ENCODE measurements at regions of chr10 and their contacts with region 1.

Region 1: GRCh38 chr10:116787893-116788665 is 45.7 kb upstream of the HSPA12A start:
- DNase-seq: peak; percentile 87

Region 2: DNA sequence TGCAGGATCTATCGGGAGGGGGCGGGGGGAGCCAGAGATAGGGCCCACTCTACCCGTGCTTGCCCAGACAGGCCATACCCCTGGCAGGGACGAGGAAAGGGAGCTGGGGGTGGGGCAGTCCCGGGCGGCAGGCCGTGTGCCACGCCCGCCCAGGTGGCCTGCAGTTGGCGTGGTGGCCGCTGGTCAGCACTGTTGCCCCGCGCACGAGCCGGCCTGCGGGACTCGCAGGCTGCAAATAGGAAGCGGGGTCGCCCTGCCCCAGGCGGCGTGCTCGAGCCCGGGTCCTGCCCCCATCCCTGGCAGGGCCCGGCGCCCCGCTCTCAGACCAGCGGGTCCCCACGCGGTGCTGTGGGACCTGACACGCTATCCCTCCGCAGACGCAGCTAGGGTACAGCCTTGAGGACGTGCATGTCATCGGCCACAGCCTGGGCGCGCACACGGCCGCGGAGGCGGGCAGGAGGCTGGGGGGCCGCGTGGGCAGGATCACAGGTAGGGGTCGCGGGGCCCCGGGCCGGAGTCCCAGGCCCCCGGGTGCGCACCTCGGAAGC is 160.6 kb before region 1 on chr10:
- CTCF ChIA-PET with region 1: interaction called, 11 read pairs
- POLR2A ChIA-PET with region 1: interaction called, 4 read pairs
- DNase-seq: no peak

Region 3: DNA sequence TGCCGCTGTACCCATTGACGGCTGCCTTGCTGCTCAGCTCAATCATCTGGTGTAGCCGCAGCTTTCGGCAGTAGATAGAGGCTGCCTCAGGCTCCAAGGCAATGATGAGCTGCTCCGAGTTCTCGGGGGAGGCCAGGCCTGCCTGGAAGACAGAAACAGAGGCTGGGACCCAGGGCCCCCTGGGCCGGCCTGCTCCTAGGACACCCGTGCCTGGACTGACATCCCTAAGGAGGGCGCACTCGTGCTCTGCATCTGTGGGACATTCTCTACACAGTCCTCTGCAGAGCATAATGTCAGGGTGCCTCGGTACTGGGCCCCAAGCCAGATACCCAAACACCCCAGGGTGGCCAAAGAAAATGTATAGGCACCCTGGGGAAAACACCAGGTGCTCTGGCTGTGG is 104.3 kb before region 1 on chr10:
- CTCF ChIA-PET with region 1: interaction called, 24 read pairs
- POLR2A ChIA-PET with region 1: no interaction called
- DNase-seq: no peak

Region 4: GRCh38 chr10:116760919-116761318 is 27.2 kb before region 1 on chr10:
- CTCF ChIA-PET with region 1: interaction called, 12 read pairs
- POLR2A ChIA-PET with region 1: no interaction called
- DNase-seq: no peak

Region 5: GRCh38 chr10:116809483-116810119 is 21.5 kb after region 1 on chr10:
- CTCF ChIA-PET with region 1: no interaction called
- POLR2A ChIA-PET with region 1: no interaction called
- DNase-seq: peak; percentile 79

Region 6: DNA sequence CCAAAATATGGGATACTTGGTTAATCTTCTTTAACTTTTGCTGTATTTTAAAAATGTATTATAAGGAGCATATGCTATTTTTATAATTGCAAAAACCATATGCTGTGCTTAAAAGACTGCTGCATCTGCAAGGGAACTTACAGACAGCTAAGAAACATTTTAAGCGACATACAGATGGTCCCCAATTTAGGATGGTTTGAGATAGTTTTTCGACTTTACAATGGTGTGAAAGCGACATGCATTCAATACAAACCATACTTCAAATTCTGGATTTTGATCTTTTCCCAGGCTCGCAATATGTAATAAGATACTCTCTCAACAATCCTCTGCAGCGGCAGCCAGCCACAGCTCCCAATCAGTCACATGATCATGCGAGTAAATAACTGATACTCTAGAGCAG is 143.7 kb after region 1 on chr10:
- CTCF ChIA-PET with region 1: no interaction called
- POLR2A ChIA-PET with region 1: no interaction called
- DNase-seq: no peak

Region 7: DNA sequence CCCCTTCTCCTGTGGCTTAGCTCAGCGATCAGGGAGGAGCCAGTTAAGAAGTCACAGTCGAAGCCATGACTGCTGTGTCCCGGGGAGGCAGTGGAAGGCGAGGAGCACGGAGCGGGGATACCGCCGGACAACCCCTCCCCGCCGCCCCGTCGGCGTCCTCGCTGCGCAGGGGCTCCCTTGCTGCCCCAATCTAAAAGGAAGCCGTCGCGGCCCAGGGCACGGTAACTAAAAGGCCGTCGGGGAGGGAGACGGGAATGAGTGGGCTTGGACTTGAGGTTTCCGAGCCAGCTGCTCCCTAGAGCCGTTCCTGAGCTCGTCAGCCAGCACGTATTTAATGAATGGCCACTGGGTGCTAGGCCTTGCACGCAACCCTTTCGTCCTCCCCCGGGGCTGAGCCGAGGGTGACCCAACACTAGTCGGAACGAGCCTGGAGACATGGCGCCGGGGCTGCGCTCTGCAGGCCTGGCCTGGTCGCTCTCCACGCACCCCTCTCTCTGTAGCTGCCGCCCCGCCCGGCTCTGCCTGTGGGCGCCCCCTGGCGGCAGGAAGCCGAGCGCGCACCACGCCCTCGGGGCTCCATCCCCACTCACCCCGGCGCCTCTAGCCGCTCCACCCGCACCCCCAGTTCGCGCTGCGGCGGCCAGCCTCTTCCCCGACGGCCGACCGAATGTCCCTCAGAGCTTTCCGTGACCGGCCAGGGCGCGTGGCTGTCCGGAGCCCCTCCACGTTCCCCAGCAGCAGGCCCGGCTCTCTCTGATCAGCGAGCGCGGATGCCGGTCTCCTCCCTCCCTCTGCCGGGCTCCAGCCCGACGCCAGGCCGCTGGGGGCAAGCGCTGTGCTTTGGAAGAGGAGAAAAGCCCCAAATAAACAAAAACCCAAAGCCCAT is 380.0 kb after region 1 on chr10:
- CTCF ChIA-PET with region 1: interaction called, 21 read pairs
- POLR2A ChIA-PET with region 1: no interaction called
- DNase-seq: peak; percentile 90

Region 8: GRCh38 chr10:117174439-117175214 is 386.5 kb after region 1 on chr10:
- CTCF ChIA-PET with region 1: interaction called, 16 read pairs
- POLR2A ChIA-PET with region 1: no interaction called
- DNase-seq: peak; percentile 84

Measured in HEK293T (cell line).